ENCODE measurements at regions of chr9 and their contacts with region 1.

Region 1: GRCh38 chr9:125143375-125144090 is at the start of gene SCAI:
- H3K4me3 ChIP-seq: peak within 1 kb of the TSS; percentile 45
- H3K27ac ChIP-seq: no peak within 1 kb of the TSS
- H3K4me1 ChIP-seq: no peaks in the 10 kb centered on the region
- CTCF ChIP-seq: peak; percentile 93

Region 2: DNA sequence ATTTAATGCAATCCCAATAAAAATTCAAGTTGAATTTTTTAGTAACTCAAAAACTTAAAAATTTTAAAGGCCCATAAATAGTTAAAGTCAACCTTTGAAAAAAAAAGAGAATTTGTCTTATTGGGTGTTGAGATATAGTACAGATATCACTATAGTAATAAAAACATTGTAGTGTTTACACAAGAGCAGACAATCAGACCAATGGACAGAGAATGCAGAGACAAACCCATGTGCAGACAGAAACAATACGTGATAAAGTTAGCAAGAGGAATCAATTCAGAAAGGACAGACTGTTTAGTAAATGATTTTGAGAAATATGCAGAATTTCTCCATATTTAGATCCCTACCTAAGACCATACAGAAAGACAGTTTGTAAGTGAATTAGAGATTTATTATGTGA is 236.6 kb before region 1 on chr9:
- CTCF ChIA-PET with region 1: no interaction called
- POLR2A ChIA-PET with region 1: interaction called, 12 read pairs
- H3K4me3 ChIP-seq: no peak overlapping the region
- H3K27ac ChIP-seq: no peak overlapping the region
- H3K4me1 ChIP-seq: peaks cover 3% of the 10 kb centered on the region; the same call in 1 of the 2 replicates
- CTCF ChIP-seq: no peak

Region 3: GRCh38 chr9:125332527-125332926 is 189.0 kb after region 1 on chr9:
- CTCF ChIA-PET with region 1: no interaction called
- POLR2A ChIA-PET with region 1: no interaction called
- H3K4me3 ChIP-seq: no peak overlapping the region
- H3K27ac ChIP-seq: no peak overlapping the region
- H3K4me1 ChIP-seq: no peaks in the 10 kb centered on the region
- CTCF ChIP-seq: no peak